AG04449 (cell line): ENCODE measurements at regions of chr1 and their contacts with region 1.

Region 1: DNA sequence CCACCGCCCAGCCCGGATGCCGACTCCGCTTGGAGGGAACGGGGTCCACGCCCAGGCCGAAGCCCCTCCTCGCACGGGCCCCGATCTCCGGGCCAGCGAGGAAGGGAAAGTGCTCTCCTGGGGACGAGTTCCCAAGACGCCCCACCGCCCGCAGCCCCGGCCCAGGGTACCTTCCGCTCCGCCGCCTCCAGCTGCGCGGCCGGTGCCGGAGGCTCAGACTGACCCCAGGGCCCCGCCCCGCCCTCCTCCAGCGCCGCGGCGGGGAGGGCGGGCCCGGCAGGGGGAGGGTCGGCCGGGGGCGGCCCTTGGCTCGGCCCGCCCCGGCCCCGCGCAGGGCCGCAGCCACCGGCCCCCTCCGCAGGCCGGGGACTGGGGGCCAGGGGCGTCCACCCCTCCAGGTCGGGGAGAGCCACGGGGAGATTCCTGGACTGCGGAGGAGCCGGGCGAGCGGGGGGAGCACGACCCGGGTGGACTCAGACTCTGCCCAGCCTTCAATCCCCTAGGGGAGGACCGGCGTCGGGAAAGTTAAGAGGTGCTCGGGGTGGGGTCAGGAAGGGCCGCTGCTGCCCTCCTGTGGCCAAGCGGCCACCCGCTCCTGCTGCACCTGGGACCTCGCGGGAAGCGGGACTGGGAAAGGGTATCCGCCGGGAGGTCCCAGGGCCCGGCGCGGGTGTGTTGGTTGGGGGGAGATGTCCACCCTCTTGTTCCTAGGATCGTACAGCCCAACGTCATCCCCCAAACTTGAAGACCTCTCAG is at the start of gene RHOC:
- DNase-seq: peak; percentile 34
- H3K4me3 ChIP-seq: peak within 1 kb of the TSS; percentile 88
- CTCF ChIP-seq: peak; percentile 98

Region 2: DNA sequence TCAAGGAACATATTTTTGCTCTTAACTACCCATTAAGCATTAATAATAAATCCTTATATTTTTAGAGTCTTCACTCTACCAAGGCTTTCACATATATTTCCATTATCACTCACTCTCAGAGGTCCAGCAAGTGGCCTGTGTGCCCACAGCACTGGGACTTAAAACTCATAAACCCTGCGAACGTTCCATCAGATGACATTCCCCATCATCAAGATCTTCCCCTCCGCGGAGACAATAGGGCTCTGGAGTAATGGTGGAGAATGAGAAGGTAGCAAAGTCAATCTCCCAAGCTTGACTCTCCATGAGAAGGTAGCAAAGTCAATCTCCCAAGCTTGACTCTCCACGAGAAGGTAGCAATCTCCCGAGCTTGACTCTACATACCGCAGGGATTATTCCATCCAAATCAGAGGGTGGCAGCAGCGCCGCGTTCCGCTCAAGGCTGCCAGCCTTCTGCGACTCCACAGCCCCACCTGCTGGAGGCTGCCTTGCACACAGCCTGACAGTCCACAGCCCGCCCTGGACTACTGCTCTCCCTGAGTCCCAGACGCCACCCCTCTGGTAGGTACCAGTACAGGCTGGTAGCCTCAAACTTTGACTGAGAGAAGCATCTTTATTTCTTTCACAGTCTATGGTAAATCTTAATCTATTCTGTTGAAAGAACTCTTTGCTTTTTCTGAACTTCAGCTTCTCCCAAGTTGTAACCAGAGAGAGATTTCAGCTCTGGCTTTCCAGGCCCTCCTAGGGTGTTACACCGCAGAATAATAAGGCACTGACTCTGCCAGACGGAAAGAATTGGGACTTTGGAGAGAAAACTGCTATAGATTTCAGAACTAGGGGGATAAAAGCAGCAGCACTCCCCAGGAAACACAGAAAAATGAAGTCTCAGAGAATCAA is 337.4 kb before region 1 on chr1:
- CTCF ChIA-PET with region 1: interaction called, 15 read pairs
- POLR2A ChIA-PET with region 1: no interaction called
- DNase-seq: no peak
- H3K4me3 ChIP-seq: no peak overlapping the region
- CTCF ChIP-seq: peak; percentile 99

Region 3: DNA sequence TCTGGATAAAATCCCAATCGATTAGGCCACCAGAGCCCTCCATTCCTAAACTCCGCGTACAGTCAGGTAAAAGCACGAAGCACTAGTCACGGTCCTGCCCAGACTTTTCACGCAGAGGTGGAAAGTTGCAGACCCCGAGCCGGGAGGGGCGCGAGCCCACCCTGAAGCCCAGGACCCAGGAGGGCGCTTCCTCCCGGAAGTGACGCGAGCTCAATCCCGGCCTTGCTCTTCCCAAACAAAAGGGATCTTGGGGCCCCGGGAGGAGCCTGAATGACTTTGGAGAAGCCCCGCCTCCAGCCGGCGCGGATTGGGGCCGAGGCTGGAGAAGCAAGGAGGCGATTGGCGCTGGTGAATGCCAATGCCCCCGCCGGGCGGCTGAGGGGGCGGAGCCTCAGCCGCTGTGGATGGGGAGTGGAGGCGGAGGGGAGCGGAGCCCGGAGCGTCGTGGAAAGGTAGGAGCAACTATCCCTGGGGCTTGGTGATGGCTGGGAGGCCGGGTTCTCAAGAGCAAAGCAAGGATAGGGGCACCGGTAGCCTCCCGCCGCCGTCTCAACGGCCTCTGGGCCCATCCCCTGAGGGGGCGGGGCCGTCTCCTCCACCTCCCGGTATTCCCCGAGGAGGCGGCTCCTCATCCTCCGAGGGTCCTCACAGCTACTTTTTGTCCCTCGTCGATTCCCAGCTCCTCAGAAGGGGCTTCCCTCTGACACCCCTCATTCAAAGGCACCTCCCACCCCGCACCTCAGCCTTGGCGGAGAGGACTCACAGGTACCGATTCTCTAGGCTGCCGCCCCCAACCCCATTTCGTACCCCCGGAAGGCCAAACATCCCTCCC is 311.0 kb before region 1 on chr1 and contains the start of gene CTTNBP2NL:
- CTCF ChIA-PET with region 1: interaction called, 62 read pairs
- POLR2A ChIA-PET with region 1: interaction called, 20 read pairs
- DNase-seq: peak; percentile 71
- H3K4me3 ChIP-seq: peak within 1 kb of the TSS; percentile 98
- CTCF ChIP-seq: no peak

Region 4: DNA sequence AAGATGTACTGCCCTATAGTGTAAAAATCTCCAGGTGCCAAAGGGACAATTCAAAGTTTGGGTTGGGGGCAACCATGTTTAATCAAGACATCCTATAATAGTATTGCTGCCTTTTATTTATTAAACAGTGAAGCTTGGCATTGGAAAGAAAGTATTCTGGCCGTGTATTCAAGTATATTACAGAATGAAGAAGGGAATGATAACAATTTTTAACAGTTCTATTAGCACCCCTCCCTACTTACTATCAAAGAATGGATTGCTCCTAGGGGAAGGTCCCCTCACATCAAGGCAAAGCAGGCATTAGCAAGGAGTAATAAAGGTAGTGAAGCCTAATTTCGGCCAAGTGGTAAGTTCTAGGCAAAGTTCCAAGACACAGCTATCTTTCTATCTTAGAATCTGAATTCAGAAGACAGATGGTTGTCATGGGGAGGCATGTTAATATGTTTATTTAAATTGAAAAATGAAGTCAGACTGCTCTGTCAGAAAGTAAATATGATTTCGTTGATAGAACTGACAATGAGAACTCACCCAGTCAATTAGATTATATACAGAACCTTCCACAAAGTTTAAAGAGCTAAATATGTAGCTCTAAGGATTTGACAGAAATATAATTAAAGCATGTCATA is 112.7 kb before region 1 on chr1:
- CTCF ChIA-PET with region 1: no interaction called
- POLR2A ChIA-PET with region 1: no interaction called
- DNase-seq: no peak
- H3K4me3 ChIP-seq: no peak overlapping the region
- CTCF ChIP-seq: no peak

Region 5: DNA sequence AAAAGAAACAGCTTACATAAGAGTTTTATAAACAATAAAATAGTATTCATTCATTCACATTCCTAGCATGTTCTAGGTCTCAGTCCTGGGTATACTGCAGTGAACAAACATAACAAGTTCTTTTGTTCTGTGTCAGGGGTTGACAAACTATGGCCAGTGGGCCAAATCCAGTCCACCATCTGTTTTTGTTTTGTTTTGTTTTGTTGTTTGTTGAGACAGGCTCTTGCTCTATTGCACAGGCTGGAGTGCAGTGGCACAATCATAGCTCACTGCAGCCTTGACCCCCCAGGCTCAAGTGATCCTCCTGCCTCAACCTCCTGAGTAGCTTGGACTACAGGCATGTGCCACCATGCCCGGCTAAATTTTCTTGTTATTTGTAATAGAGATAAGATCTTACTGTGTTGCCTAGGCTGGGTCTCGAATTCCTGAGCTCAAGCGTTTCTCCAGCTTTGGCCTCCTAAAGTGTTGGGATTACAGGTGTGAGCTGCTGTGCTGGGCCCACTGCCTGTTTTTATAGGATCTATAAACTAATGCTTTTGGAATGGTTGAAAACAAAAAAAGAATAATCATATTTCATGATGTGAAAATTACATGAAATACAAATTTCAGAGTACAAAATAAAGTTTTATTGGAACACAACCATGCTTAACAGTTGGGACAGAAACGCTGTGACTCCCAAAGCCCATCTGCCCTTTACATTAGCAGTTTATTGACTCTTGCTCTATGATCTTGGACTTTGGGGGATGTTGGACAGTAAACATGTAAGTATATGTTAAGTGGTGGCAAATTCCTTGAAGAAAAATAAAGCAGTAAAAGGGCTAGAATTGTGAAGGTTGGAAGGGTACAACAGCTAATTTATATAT is 69.6 kb before region 1 on chr1:
- CTCF ChIA-PET with region 1: interaction called, 10 read pairs
- POLR2A ChIA-PET with region 1: no interaction called
- DNase-seq: no peak
- H3K4me3 ChIP-seq: no peak overlapping the region
- CTCF ChIP-seq: no peak

Region 6: GRCh38 chr1:112722601-112723510 is 15.8 kb after region 1 on chr1:
- CTCF ChIA-PET with region 1: interaction called, 39 read pairs
- POLR2A ChIA-PET with region 1: no interaction called
- DNase-seq: no peak
- H3K4me3 ChIP-seq: peak overlapping the region; percentile 8; the same call in 1 of the 2 replicates
- CTCF ChIP-seq: no peak

Region 7: DNA sequence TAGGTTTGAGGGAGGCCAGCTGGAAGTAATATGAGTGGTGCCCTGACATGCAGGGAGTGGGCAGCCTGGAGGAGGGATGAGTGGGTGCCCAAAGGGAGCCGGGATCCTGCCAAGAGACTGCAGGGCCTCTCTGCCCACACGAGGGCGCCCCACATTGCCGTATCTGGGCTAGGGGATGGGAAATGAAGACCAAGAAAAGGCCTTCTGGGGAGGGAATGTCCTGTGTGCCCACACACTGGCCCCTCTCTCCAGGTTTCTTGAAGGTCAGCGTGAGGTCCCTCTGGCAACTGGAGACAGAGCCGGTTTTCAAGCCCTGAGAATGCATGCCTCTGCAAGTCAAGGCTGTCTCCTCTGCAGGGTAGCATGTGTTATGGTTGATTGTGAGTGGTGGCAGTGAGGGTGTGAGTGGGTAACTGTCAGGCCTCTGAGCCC is 102.2 kb after region 1 on chr1:
- CTCF ChIA-PET with region 1: interaction called, 17 read pairs
- POLR2A ChIA-PET with region 1: no interaction called
- DNase-seq: no peak
- H3K4me3 ChIP-seq: no peak overlapping the region
- CTCF ChIP-seq: peak; percentile 97

Region 8: GRCh38 chr1:112950426-112950825 is 243.3 kb after region 1 on chr1:
- CTCF ChIA-PET with region 1: no interaction called
- POLR2A ChIA-PET with region 1: no interaction called
- DNase-seq: no peak
- H3K4me3 ChIP-seq: no peak overlapping the region
- CTCF ChIP-seq: no peak